ENCODE measurements at regions of chr16 and their contacts with region 1.

Region 1: GRCh38 chr16:684067-684794 is at the start of gene JMJD8:
- DNase-seq: peak; percentile 97
- H3K4me3 ChIP-seq: peak within 1 kb of the TSS; percentile 60 to 68
- H3K27ac ChIP-seq: peak within 1 kb of the TSS; percentile 54 to 82
- H3K4me1 ChIP-seq: peaks cover 8 to 53% of the 10 kb centered on the region in 2 experiments; a peak in 3 of 4 replicates
- H3K27me3 ChIP-seq: no peaks in the 10 kb centered on the region
- CTCF ChIP-seq: no peak
- EP300 ChIP-seq: no peak
- RAD21 ChIP-seq: no peak
- polyA plus RNA-seq, gene JMJD8: 49.2 and 67.0 TPM in 2 replicates

Region 2: DNA sequence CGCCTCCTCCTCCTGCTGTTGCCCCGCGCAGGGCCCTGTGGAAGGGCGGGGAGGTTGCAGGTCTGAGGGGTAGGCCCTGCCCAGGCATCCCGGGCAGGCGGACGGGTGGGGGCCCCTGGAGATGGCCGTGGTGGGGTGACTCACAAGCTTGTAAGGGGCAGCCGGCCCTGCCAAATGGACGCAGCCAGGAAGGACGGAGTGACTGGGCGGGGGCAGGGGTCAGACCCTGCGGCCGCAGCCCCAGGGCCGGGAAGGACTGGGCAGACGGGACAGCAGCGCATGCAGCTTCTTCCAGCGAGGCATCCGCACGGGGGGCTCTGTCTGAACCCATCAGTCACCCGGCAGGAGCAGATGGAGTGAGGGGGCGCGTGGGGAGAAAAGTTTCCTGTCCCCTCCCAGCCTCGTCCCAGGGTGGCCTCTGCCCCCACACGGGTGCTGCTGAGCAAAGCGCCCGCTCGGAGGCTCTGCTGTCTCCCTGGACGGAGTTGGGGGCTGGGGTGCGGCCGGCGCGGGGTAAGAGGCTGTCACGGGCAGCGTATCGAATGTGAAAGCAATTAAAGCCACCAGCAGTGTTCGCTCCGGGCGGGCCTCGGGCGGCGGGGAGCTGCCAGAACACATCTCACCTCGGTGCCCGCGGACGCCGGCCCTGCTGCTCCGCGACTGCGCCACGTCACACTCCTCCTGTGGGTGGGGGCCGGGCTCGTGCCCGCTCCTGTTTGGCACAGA is 129.4 kb before region 1 on chr16:
- CTCF ChIA-PET with region 1: no interaction called
- POLR2A ChIA-PET with region 1: no interaction called
- DNase-seq: no peak
- H3K4me3 ChIP-seq: no peak overlapping the region
- H3K27ac ChIP-seq: no peak overlapping the region
- H3K4me1 ChIP-seq: peaks cover 0 to 9% of the 10 kb centered on the region in 2 experiments; a peak in 1 of 4 replicates
- H3K27me3 ChIP-seq: peaks cover 15% of the 10 kb centered on the region
- CTCF ChIP-seq: no peak
- EP300 ChIP-seq: no peak
- RAD21 ChIP-seq: no peak

Region 3: DNA sequence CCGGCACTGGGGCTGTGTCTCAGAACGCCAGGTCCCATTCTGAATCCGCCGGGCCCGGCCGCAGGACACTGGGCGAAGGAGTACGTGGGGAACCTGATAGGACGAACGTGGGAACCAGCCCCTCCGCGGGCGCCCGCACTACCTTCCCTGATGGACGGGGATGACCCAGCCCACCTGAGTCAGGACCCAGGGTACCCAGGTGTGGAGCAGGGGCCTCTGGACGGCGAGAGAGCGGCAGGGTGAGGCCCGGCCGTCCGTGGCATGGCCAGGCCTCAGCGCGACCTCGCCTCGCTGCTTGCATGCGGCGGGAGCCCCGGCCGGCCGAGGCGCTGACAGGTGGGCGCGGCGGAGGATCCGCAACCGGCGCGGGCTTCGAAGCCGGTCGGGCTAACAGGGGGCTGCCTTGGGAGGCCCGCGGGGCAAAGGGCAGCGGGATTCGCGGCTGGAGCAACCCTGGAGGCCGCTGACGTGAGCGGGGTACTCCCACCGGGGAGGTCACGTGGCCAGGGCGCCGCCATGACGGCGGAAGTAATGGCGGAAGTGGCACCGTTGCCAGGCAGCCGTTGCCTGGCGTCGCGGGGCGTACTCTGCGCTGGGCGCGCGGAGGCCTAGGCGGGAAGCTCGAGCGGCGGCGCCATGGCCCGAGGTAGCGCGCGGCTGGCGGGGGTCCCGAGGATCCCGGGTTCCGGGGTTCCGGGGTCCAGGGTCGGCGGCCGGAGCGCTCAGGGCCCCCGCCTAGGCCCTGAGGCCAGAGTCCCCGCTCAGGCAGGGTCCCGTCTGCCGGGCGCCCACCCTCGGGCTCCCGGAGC is 35.2 kb before region 1 on chr16 and contains the start of gene WDR90:
- CTCF ChIA-PET with region 1: interaction called, 19 read pairs
- POLR2A ChIA-PET with region 1: interaction called, 3 read pairs
- DNase-seq: peak; percentile 99
- H3K4me3 ChIP-seq: peak within 1 kb of the TSS; percentile 70 to 76
- H3K27ac ChIP-seq: peak within 1 kb of the TSS; percentile 77 to 80
- H3K4me1 ChIP-seq: peaks cover 4 to 29% of the 10 kb centered on the region in 2 experiments; a peak in 2 of 4 replicates
- H3K27me3 ChIP-seq: no peaks in the 10 kb centered on the region
- CTCF ChIP-seq: no peak
- EP300 ChIP-seq: no peak
- RAD21 ChIP-seq: no peak
- polyA plus RNA-seq, gene WDR90: 30.5 and 32.0 TPM in 2 replicates

Region 4: GRCh38 chr16:660459-661183 is 23.6 kb before region 1 on chr16:
- CTCF ChIA-PET with region 1: interaction called, 20 read pairs
- POLR2A ChIA-PET with region 1: interaction called, 5 read pairs
- DNase-seq: peak; percentile 98
- H3K4me3 ChIP-seq: peak overlapping the region in 1 of 2 experiments; percentile 40; a peak in 2 of 4 replicates
- H3K27ac ChIP-seq: peak overlapping the region; percentile 45 to 96
- H3K4me1 ChIP-seq: peaks cover 3 to 35% of the 10 kb centered on the region in 2 experiments; a peak in 3 of 4 replicates
- H3K27me3 ChIP-seq: no peaks in the 10 kb centered on the region
- CTCF ChIP-seq: peak; percentile 55
- EP300 ChIP-seq: no peak; a peak in 1 of 4 replicates
- RAD21 ChIP-seq: peak; percentile 14; the same call in 1 of the 2 replicates

Region 5: DNA sequence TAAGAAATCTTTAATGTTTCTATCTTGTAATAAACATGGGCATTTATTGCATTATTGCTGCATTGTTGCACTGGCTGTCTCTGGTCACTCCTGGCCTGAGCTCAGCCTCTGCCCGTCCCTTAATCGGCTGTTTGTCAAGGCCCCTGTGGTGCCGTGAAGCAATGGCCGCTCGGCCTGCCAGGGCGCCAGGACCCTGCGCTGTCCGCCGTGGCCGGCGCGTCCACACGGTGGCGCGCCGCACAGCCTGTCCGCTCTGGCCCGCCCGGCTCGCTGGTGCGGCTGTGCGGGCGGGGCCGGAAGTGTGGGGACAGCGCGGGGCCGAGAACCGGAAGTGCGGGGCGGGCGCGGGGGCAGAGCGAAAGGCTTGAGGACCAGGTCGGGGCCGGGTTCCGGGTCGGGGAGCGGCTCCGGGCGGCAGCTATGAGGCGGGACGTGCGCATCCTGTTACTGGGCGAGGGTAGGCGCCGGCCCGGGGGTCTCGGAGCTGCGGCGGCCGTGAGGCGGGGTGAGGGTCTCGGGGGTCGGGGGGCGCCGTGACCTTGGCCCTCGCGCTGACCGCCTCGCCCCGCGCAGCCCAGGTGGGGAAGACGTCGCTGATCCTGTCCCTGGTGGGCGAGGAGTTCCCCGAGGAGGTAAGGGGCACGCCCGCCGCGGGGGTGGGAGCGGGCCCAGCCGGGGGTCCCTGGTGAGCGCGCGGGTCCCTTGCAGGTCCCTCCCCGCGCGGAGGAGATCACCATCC is 16.3 kb before region 1 on chr16 and contains the start of gene RHOT2:
- CTCF ChIA-PET with region 1: interaction called, 38 read pairs
- POLR2A ChIA-PET with region 1: interaction called, 4 read pairs
- DNase-seq: peak; percentile 96
- H3K4me3 ChIP-seq: peak within 1 kb of the TSS; percentile 88 to 93
- H3K27ac ChIP-seq: peak within 1 kb of the TSS; percentile 56 to 81
- H3K4me1 ChIP-seq: peaks cover 0 to 15% of the 10 kb centered on the region in 2 experiments; a peak in 1 of 4 replicates
- H3K27me3 ChIP-seq: no peaks in the 10 kb centered on the region
- CTCF ChIP-seq: peak; percentile 82
- EP300 ChIP-seq: peak; percentile 25 to 30; a peak in 1 of 4 replicates
- RAD21 ChIP-seq: peak; percentile 44; the same call in 1 of the 2 replicates
- polyA plus RNA-seq, gene RHOT2: 229 and 255 TPM in 2 replicates

Region 6: GRCh38 chr16:705748-706188 is 21.5 kb after region 1 on chr16 and contains the start of gene FBXL16:
- CTCF ChIA-PET with region 1: interaction called, 11 read pairs
- POLR2A ChIA-PET with region 1: interaction called, 3 read pairs
- DNase-seq: peak; percentile 98
- H3K4me3 ChIP-seq: peak within 1 kb of the TSS; percentile 78 to 82
- H3K27ac ChIP-seq: peak within 1 kb of the TSS in 1 of 2 experiments; percentile 64; a peak in 1 of 4 replicates
- H3K4me1 ChIP-seq: peaks cover 15 to 37% of the 10 kb centered on the region in 2 experiments; a peak in 2 of 4 replicates
- H3K27me3 ChIP-seq: no peaks in the 10 kb centered on the region
- CTCF ChIP-seq: no peak
- EP300 ChIP-seq: no peak
- RAD21 ChIP-seq: no peak
- polyA plus RNA-seq, gene FBXL16: 17.7 and 19.8 TPM in 2 replicates

Region 7: DNA sequence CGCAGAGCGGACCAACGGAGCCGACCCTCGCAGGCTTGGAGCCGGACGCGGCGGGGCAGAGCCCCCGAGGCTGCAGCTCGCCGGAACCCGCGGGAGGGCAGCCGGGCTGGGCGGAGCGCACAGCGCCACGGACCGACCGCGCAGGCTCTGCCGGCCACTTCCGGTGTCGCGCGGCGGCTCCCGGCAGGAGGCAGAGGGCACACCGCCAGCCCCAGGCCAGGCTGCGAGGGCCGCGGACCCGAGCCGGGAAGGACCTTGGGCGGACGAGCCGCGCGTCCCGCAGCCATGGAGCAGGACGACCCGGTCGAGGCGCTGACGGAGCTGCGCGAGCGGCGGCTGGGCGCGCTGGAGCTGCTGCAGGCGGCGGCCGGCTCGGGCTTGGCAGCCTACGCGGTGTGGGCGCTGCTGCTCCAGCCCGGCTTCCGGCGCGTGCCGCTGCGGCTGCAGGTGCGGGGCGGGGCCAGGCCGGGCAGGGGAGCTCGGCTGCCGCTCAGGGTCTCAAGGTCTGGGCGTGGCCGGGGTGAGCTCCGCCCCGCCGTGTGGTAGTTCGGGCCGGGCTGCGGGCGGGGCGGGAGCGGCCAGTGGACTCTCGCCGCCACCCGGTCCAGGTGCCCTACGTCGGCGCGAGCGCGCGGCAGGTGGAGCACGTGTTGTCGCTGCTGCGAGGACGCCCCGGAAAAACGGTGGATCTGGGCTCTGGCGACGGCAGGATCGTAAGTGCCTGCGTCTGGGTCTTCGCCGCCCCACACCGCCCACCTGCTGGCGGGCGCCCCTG is 36.9 kb after region 1 on chr16 and contains the start of gene ANTKMT:
- CTCF ChIA-PET with region 1: interaction called, 13 read pairs
- POLR2A ChIA-PET with region 1: interaction called, 6 read pairs
- DNase-seq: peak; percentile 92
- H3K4me3 ChIP-seq: peak within 1 kb of the TSS; percentile 86 to 89
- H3K27ac ChIP-seq: peak within 1 kb of the TSS; percentile 91 to 99
- H3K4me1 ChIP-seq: peaks cover 8 to 43% of the 10 kb centered on the region in 2 experiments; a peak in 3 of 4 replicates
- H3K27me3 ChIP-seq: no peaks in the 10 kb centered on the region
- CTCF ChIP-seq: no peak
- EP300 ChIP-seq: no peak
- RAD21 ChIP-seq: no peak
- polyA plus RNA-seq, gene ANTKMT: 49.5 and 57.4 TPM in 2 replicates

Region 8: GRCh38 chr16:749001-749400 is 64.8 kb after region 1 on chr16:
- CTCF ChIA-PET with region 1: no interaction called
- POLR2A ChIA-PET with region 1: no interaction called
- DNase-seq: no peak
- H3K4me3 ChIP-seq: no peak overlapping the region
- H3K27ac ChIP-seq: no peak overlapping the region
- H3K4me1 ChIP-seq: no peaks in the 10 kb centered on the region
- H3K27me3 ChIP-seq: no peaks in the 10 kb centered on the region
- CTCF ChIP-seq: no peak
- EP300 ChIP-seq: no peak
- RAD21 ChIP-seq: no peak

Measured in SK-N-SH (cell line).